ENCODE measurements at regions of chr2 and their contacts with region 1.

Region 1: DNA sequence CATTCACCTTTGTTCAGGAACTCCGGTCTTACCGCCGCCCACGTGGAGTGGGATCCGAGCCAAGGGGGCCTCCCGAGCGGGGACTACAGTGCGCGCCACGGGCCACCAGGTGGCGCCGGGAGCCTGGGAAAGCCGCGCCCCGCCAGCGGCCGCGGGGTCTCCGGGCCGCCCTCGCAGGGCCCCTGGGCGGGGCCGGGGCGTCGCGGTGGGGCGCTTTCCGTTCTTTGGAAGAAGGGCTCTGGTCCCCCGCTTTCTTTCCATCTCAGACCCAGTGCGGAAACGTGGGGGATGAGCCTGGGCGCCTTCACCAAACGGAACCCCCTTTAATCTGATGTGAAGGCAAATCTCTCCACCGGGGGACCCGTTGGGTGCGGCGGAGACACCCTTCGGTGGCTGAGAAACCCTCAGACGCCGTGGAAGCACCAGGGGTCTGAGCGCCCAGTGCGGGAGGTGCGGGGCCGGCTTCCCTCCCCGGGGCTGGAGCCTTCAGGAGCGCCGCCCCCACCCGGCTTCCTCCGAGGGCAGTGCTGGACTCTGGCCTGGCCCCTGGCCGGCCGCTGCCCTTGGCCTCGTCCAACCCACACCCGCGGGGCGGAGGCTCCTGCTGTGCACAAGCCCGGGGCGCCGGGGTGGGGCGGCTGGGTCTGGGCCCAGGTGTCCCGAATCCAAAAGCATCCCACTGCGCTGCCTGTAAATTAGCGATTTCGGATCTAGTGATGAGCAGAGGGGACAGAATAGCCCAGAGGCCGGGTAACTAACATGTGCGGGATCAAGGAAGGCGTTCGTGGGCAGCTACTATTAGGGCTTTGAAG is 44.6 kb downstream of the GORASP2 start:
- DNase-seq: peak; percentile 93
- ATAC-seq: peak; percentile 98

Region 2: GRCh38 chr2:171416009-171416926 is 442.6 kb after region 1 on chr2:
- intact Hi-C with region 1: loop called (anchors 5 kb)
- DNase-seq: peak; percentile 84
- ATAC-seq: peak; percentile 99

Measured in left ventricle myocardium superior (tissue), 1 donor.